ENCODE measurements at regions of chr6 and their contacts with region 1.

Region 1: GRCh38 chr6:89371849-89372505 is 19.5 kb upstream of the UBE2J1 start:
- H3K4me3 Mint-ChIP-seq: no peak overlapping the region
- H3K27ac Mint-ChIP-seq: no peak overlapping the region
- H3K4me1 Mint-ChIP-seq: peaks cover 8% of the 10 kb centered on the region
- H3K27me3 Mint-ChIP-seq: no peaks in the 10 kb centered on the region

Region 2: DNA sequence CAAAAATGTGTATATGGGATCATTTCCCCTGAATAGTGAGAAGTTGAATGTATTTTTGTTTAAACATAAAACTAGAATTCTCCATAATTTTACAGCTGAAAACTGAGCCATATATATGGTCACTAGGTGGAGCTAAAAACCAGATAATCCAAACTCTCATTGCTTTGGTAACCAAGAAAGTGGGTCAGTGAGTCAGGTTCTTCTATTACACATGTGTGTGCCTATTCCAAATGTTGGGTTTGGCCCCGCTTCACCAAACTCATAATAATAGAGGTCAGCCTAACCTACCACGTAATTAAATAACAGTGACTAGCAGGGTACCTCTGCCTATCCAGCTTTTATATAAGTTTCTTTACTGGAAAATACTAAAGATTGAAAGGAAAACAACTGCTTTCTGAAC is 389.3 kb before region 1 on chr6:
- intact Hi-C with region 1: loop called (anchors 5 kb)
- H3K4me3 Mint-ChIP-seq: no peak overlapping the region
- H3K27ac Mint-ChIP-seq: no peak overlapping the region
- H3K4me1 Mint-ChIP-seq: peaks cover 9% of the 10 kb centered on the region
- H3K27me3 Mint-ChIP-seq: no peaks in the 10 kb centered on the region

Region 3: GRCh38 chr6:89411145-89412070 is 39.4 kb after region 1 on chr6:
- intact Hi-C with region 1: loop called (anchors 2 kb)
- H3K4me3 Mint-ChIP-seq: peak overlapping the region; percentile 91
- H3K27ac Mint-ChIP-seq: peak overlapping the region; percentile 90
- H3K4me1 Mint-ChIP-seq: peaks cover 29% of the 10 kb centered on the region
- H3K27me3 Mint-ChIP-seq: peaks cover 8% of the 10 kb centered on the region

Region 4: GRCh38 chr6:89597988-89598692 is 226.2 kb after region 1 on chr6:
- intact Hi-C with region 1: loop called (anchors 5 kb)
- H3K4me3 Mint-ChIP-seq: no peak overlapping the region
- H3K27ac Mint-ChIP-seq: no peak overlapping the region
- H3K4me1 Mint-ChIP-seq: peaks cover 19% of the 10 kb centered on the region
- H3K27me3 Mint-ChIP-seq: no peaks in the 10 kb centered on the region

Region 5: DNA sequence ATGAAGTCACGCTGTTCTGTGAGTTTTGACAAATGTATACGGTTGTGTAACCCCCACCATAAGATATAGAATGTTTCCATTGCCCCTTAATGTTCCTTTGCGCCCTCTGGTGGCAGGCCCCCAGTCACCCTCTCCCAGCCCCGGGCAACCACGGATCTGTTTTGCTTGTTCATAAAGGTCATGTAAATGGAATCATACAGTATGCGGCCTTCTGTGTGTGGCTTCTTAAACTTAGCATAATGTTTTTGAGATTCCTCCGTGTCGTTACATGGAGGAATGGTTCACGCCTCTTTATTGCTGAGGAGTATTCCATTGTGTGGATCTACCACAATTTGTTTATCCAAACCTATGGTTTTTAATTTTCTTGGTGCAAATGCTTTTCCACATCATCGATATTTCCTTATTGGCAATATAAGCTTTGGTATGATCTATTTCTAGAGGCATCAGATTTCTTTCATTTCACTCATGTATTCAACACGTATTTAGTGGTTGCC is 238.2 kb after region 1 on chr6:
- intact Hi-C with region 1: loop called (anchors 1 kb)
- H3K4me3 Mint-ChIP-seq: no peak overlapping the region
- H3K27ac Mint-ChIP-seq: no peak overlapping the region
- H3K4me1 Mint-ChIP-seq: no peaks in the 10 kb centered on the region
- H3K27me3 Mint-ChIP-seq: no peaks in the 10 kb centered on the region

Measured in dendritic cell treated with granulocyte-macrophage colony-stimulating factor and Interleukin-4, amounts not matched to agents 40 ng/mL and 50 ng/mL, for 4 days (primary cell).